A549 (cell line): ENCODE measurements at regions of chr15 and their contacts with region 1.

Region 1: DNA sequence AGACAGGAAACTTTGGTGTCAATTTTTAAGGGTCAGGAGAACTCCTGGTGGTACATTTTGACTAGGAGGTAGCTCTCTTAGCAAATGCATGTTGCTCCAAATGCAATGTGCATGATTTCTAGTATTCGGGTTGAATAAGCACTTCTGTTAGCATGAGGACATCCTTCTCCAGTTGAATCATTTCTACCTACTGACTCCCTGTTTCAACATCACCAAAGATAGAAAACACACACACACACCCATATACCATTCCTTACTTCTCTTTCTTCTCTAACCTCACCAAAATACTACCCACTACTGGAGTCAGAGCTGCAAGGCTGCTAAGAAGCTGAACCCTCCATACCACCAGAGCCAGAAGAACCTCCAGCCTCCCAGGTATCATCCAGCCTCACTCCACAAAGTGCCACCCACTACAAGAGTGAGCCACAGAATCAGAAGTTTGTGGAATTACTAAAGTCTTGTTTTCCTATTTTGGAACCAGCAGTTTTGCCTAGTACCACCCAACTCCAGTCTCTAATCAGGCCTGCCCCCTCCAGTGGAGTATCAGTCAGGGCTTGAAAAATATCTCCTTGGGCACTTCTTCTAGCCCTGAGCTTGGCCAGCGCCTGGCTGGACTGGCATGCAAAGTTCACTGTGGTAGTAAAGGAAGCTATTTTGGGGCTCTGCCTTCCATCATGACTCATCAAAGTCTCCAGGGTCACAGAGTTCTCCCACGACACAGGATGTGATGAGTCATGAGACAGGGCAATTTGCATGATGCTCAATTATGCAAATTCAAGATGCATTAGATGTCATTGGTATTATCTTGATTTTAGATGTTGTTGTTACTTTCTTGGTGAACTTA is 110.2 kb downstream of the CYP19A1 start:
- DNase-seq: peak; percentile 69 to 72
- ATAC-seq: peak; percentile 71 to 73
- H3K4me3 ChIP-seq: no peak overlapping the region
- H3K27ac ChIP-seq: peak overlapping the region; percentile 31 to 68; a peak in 5 of 6 replicates
- H3K4me1 ChIP-seq: peaks cover 14% of the 10 kb centered on the region
- CTCF ChIP-seq: no peak
- EP300 ChIP-seq: no peak
- POLR2A ChIP-seq: no peak
- RAD21 ChIP-seq: no peak

Region 2: GRCh38 chr15:51239748-51240465 is 11.7 kb after region 1 on chr15:
- CTCF ChIA-PET with region 1: interaction called, 11 read pairs
- POLR2A ChIA-PET with region 1: no interaction called
- DNase-seq: no peak
- ATAC-seq: no peak
- H3K4me3 ChIP-seq: no peak overlapping the region
- H3K27ac ChIP-seq: no peak overlapping the region
- H3K4me1 ChIP-seq: 0 out of 3 replicates have a peak, but pooled peaks cover 4% of the 10 kb centered on the region
- CTCF ChIP-seq: no peak
- EP300 ChIP-seq: no peak
- POLR2A ChIP-seq: no peak
- RAD21 ChIP-seq: no peak